ENCODE measurements at regions of chr13 and their contacts with region 1.

Region 1: DNA sequence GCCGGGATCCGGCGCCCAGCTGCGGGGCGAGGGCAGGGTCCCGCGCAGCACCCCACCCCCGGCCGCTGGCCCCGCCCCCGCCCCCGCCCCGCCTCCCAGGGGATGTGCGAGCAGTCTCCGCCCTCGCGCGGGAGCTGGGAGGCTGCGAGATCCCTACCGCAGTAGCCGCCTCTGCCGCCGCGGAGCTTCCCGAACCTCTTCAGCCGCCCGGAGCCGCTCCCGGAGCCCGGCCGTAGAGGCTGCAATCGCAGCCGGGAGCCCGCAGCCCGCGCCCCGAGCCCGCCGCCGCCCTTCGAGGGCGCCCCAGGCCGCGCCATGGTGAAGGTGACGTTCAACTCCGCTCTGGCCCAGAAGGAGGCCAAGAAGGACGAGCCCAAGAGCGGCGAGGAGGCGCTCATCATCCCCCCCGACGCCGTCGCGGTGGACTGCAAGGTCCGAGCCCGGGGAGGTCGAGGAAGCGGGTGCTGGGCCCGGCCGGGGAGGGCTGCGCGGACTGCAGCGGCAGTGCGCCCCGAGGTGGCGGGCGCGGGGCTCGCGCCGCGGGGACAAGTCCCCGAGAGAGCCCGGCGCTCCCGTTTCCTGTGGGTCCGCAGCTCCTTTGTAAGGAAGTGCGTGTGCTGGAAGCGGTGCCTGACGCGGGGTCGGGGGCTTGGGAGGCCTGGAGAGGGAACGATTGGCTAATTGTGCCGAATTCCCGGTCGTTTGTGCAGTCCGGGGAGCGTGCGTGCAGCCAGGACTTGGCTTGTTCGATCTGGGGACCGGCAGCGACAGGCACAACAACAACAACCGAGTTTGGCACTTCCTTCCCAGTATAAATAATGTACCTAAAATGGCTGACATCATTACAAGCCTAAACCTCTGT is at the start of gene ITM2B:
- DNase-seq: peak; percentile 78
- ATAC-seq: peak; percentile 71
- H3K4me3 Mint-ChIP-seq: peak within 1 kb of the TSS; percentile 84
- H3K27ac Mint-ChIP-seq: peak within 1 kb of the TSS; percentile 89
- H3K4me1 Mint-ChIP-seq: peaks cover 56% of the 10 kb centered on the region
- H3K27me3 Mint-ChIP-seq: peaks cover 2% of the 10 kb centered on the region
- total RNA-seq, gene ITM2B: 67.0 to 96.5 TPM

Region 2: GRCh38 chr13:48126944-48127830 is 106.1 kb before region 1 on chr13:
- CTCF ChIA-PET with region 1: interaction called, 5 read pairs
- POLR2A ChIA-PET with region 1: no interaction called
- intact Hi-C with region 1: loop called (anchors 1 kb)
- DNase-seq: peak; percentile 33
- ATAC-seq: peak; percentile 77
- H3K4me3 Mint-ChIP-seq: no peak overlapping the region
- H3K27ac Mint-ChIP-seq: no peak overlapping the region
- H3K4me1 Mint-ChIP-seq: peaks cover 20% of the 10 kb centered on the region
- H3K27me3 Mint-ChIP-seq: no peaks in the 10 kb centered on the region

Region 3: DNA sequence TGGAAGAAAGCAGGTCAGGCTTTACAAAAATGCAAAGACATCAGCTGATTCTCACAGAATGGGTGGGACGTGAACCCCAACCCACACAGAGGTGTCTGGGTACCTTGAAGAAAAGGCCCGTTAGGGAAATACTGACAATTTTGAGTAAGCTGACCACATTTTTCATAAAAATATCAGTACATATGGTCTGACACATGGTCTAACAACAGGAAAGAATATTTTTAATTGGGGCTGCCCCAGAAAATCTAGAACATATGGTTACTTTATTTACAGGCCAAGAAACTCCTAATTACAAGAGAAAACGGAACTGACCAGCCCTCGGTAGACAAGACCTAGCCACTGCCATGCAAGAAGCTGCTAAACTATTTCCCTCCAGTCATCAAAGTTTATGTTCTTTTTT is 49.0 kb before region 1 on chr13:
- CTCF ChIA-PET with region 1: no interaction called
- POLR2A ChIA-PET with region 1: interaction called, 6 read pairs
- intact Hi-C with region 1: loop called in 1 of 2 experiments (anchors 2 kb)
- DNase-seq: no peak
- ATAC-seq: no peak
- H3K4me3 Mint-ChIP-seq: no peak overlapping the region
- H3K27ac Mint-ChIP-seq: peak overlapping the region; percentile 9
- H3K4me1 Mint-ChIP-seq: peaks cover 59% of the 10 kb centered on the region
- H3K27me3 Mint-ChIP-seq: no peaks in the 10 kb centered on the region

Region 4: DNA sequence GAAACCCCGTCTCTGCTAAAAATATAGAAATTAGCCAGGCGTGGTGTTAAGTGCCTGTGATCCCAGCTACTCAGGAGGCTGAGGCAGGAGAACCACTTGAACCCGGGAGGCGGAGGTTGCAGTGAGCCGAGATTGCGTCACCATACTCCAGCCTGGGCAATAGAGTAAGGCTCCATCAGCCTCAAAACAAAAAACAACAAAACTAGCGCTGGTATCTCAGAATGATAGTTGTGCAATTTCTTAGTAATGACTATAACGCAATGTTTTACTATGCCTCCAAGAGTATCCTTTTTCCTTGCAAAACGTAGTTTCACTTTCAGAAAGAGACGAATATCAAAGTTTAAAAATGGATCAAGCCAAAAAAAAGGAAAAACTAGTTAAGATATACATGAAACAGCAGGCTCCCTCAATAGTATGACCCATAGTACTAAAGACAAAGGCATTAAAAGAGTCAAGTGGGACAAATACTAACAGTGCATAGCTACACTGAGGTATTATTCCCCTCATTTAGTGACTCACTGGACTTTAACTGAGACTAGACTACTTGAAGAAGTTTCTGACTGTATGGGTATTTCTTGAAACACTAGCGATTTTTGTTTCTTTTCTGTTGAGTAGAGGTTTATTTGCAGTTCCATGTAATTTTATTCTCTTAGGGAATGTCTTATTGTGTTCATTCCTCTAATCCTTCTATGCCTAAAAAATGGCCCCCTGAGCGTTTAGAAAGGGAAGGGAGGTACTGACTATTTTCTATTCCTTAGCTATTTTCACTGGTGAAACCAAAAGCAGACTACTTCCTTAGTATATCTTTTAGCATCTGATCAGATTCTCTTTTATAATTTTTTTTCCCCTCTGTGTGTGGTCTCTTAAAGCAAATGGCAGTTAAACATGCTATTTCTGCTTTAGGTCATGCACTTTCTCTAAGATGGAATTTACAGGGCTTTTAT is 10.6 kb before region 1 on chr13:
- CTCF ChIA-PET with region 1: interaction called, 4 read pairs
- POLR2A ChIA-PET with region 1: interaction called, 4 read pairs
- intact Hi-C with region 1: loop called (anchors 1 kb)
- DNase-seq: no peak
- ATAC-seq: peak; percentile 67
- H3K4me3 Mint-ChIP-seq: peak overlapping the region; percentile 39
- H3K27ac Mint-ChIP-seq: no peak overlapping the region
- H3K4me1 Mint-ChIP-seq: peaks cover 50% of the 10 kb centered on the region
- H3K27me3 Mint-ChIP-seq: no peaks in the 10 kb centered on the region

Region 5: GRCh38 chr13:48303359-48304142 is 70.3 kb after region 1 on chr13 and contains the start of gene RB1:
- CTCF ChIA-PET with region 1: no interaction called
- POLR2A ChIA-PET with region 1: no interaction called
- intact Hi-C with region 1: loop called (anchors 1 kb)
- DNase-seq: peak; percentile 94
- ATAC-seq: peak; percentile 81
- H3K4me3 Mint-ChIP-seq: peak within 1 kb of the TSS; percentile 81
- H3K27ac Mint-ChIP-seq: peak within 1 kb of the TSS; percentile 99
- H3K4me1 Mint-ChIP-seq: peaks cover 27% of the 10 kb centered on the region
- H3K27me3 Mint-ChIP-seq: no peaks in the 10 kb centered on the region
- total RNA-seq, gene RB1: 26.9 to 32.8 TPM

Region 6: GRCh38 chr13:48320891-48321510 is 87.7 kb after region 1 on chr13:
- CTCF ChIA-PET with region 1: no interaction called
- POLR2A ChIA-PET with region 1: no interaction called
- intact Hi-C with region 1: no loop called
- DNase-seq: no peak
- ATAC-seq: no peak
- H3K4me3 Mint-ChIP-seq: peak overlapping the region; percentile 69
- H3K27ac Mint-ChIP-seq: no peak overlapping the region
- H3K4me1 Mint-ChIP-seq: peaks cover 25% of the 10 kb centered on the region
- H3K27me3 Mint-ChIP-seq: peaks cover 3% of the 10 kb centered on the region

Region 7: GRCh38 chr13:48562296-48563066 is 329.2 kb after region 1 on chr13:
- CTCF ChIA-PET with region 1: no interaction called
- POLR2A ChIA-PET with region 1: no interaction called
- intact Hi-C with region 1: loop called in 1 of 2 experiments (anchors 5 kb)
- DNase-seq: peak; percentile 76
- ATAC-seq: peak; percentile 98
- H3K4me3 Mint-ChIP-seq: no peak overlapping the region
- H3K27ac Mint-ChIP-seq: no peak overlapping the region
- H3K4me1 Mint-ChIP-seq: peaks cover 30% of the 10 kb centered on the region
- H3K27me3 Mint-ChIP-seq: peaks cover 58% of the 10 kb centered on the region

Measured in activated CD4-positive, alpha-beta T cell treated with anti-CD3 and anti-CD28 coated beads for 36 hours (primary cell).